ENCODE measurements at regions of chr14 and their contacts with region 1.

Region 1: DNA sequence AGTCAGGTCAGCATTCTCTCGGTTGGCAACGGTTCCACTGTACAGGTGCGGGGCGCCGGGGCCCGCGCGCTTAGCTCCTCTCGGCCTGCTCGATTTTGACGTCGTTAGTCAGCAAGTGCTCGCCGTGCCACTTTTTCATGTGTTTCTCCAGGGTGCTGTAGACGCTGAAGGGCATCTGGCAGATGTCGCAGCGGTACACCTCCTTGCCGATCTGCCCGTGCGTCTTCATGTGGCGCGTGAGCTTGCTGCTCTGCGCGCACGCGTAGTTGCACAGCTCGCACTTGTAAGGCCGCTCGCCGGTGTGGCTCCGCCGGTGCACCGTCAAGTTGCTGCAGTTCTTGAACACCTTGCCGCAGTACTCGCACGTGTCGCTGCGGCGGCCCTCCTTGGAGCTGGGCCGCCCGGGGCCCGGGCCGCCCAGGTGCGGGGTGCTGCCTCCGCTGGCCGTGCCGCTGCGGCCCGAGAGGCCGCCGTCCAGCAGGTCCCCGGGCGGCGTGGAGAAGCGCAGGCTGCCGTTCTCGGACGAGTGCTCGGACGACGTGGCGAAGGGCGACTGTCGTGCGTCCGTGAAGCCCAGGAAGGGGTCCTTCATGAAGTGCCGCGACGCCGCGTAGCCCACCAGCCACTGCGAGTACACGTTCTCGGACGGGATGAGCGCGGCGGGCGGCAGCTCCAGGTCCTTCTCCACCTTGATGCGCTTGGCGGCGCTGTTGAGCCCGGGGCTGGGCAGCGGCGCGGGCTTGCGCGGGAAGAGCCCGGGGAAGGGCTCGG is 97.7 kb downstream of the BCL11B start:
- DNase-seq: peak; percentile 68
- ATAC-seq: peak; percentile 48
- H3K4me3 Mint-ChIP-seq: no peak overlapping the region
- H3K27ac Mint-ChIP-seq: peak overlapping the region; percentile 52; the same call in 1 of the 2 replicates
- H3K4me1 Mint-ChIP-seq: peaks cover 53% of the 10 kb centered on the region
- H3K27me3 Mint-ChIP-seq: no peaks in the 10 kb centered on the region
- CTCF ChIP-seq: 0 out of 2 replicates have a peak, but pooled peaks have one; percentile 25

Region 2: GRCh38 chr14:99188731-99189191 is 14.5 kb after region 1 on chr14:
- CTCF ChIA-PET with region 1: interaction called, 12 read pairs
- POLR2A ChIA-PET with region 1: no interaction called
- DNase-seq: peak; percentile 73
- ATAC-seq: peak; percentile 91
- H3K4me3 Mint-ChIP-seq: no peak overlapping the region
- H3K27ac Mint-ChIP-seq: 0 out of 2 replicates have a peak overlapping the region, but pooled peaks have one; percentile 57
- H3K4me1 Mint-ChIP-seq: peaks cover 52% of the 10 kb centered on the region
- H3K27me3 Mint-ChIP-seq: no peaks in the 10 kb centered on the region
- CTCF ChIP-seq: peak; percentile 48